Calu3 (cell line): ENCODE measurements at regions of chr17 and their contacts with region 1.

Region 1: GRCh38 chr17:42548070-42548837 is 4.5 kb upstream of the HSD17B1 start:
- DNase-seq: peak; percentile 98
- H3K4me3 Mint-ChIP-seq: peak overlapping the region; percentile 56
- H3K27ac Mint-ChIP-seq: no peak overlapping the region
- H3K4me1 Mint-ChIP-seq: peaks cover 30% of the 10 kb centered on the region
- H3K27me3 Mint-ChIP-seq: no peaks in the 10 kb centered on the region
- CTCF ChIP-seq: peak; percentile 88

Region 2: GRCh38 chr17:42337442-42337841 is 210.8 kb before region 1 on chr17:
- CTCF ChIA-PET with region 1: no interaction called
- intact Hi-C with region 1: no loop called
- DNase-seq: no peak
- H3K4me3 Mint-ChIP-seq: no peak overlapping the region
- H3K27ac Mint-ChIP-seq: no peak overlapping the region
- H3K4me1 Mint-ChIP-seq: no peaks in the 10 kb centered on the region
- H3K27me3 Mint-ChIP-seq: no peaks in the 10 kb centered on the region
- CTCF ChIP-seq: no peak

Region 3: DNA sequence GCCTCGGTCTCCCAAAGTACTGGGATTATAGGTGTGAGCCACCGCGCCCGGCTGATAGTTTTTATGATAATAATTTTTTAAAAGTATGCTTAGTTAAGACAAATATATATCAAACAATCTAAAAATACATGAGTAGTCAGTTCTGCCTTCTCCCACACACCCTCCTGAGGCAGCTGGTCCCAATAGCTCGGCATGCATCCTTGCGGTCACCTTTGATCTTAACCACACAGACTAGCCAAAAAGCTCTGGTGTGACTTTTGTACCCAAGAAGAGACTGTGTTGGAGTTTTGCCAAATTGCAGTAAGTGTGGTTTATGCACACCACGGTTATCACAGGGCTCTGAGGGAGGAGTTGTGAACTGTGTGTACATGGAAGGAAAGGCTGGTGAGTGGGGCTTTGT is 64.0 kb before region 1 on chr17:
- CTCF ChIA-PET with region 1: no interaction called
- intact Hi-C with region 1: no loop called
- DNase-seq: no peak
- H3K4me3 Mint-ChIP-seq: no peak overlapping the region
- H3K27ac Mint-ChIP-seq: no peak overlapping the region
- H3K4me1 Mint-ChIP-seq: no peaks in the 10 kb centered on the region
- H3K27me3 Mint-ChIP-seq: no peaks in the 10 kb centered on the region
- CTCF ChIP-seq: no peak

Region 4: DNA sequence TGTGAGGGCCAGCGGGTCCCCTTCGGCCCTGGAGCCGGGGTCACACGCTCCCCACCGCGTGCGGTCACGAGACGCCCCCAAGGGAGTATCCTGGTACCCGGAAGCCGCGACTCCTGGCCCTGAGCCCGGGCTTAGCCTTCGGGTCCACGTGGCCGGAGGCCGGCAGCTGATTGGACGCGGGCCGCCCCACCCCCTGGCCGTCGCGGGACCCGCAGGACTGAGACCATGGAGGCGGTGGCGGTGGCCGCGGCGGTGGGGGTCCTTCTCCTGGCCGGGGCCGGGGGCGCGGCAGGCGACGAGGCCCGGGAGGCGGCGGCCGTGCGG is 12.2 kb before region 1 on chr17 and contains the start of gene NAGLU:
- CTCF ChIA-PET with region 1: interaction called, 11 read pairs
- intact Hi-C with region 1: no loop called
- DNase-seq: peak; percentile 99
- H3K4me3 Mint-ChIP-seq: peak within 1 kb of the TSS; percentile 94
- H3K27ac Mint-ChIP-seq: peak within 1 kb of the TSS; percentile 69
- H3K4me1 Mint-ChIP-seq: peaks cover 53% of the 10 kb centered on the region
- H3K27me3 Mint-ChIP-seq: no peaks in the 10 kb centered on the region
- CTCF ChIP-seq: no peak
- total RNA-seq, gene NAGLU: 53.8 and 59.1 TPM in 2 replicates